Colonic mucosa (tissue), 4 donors: ENCODE measurements at regions of chr17 and their contacts with region 1.

Region 1: DNA sequence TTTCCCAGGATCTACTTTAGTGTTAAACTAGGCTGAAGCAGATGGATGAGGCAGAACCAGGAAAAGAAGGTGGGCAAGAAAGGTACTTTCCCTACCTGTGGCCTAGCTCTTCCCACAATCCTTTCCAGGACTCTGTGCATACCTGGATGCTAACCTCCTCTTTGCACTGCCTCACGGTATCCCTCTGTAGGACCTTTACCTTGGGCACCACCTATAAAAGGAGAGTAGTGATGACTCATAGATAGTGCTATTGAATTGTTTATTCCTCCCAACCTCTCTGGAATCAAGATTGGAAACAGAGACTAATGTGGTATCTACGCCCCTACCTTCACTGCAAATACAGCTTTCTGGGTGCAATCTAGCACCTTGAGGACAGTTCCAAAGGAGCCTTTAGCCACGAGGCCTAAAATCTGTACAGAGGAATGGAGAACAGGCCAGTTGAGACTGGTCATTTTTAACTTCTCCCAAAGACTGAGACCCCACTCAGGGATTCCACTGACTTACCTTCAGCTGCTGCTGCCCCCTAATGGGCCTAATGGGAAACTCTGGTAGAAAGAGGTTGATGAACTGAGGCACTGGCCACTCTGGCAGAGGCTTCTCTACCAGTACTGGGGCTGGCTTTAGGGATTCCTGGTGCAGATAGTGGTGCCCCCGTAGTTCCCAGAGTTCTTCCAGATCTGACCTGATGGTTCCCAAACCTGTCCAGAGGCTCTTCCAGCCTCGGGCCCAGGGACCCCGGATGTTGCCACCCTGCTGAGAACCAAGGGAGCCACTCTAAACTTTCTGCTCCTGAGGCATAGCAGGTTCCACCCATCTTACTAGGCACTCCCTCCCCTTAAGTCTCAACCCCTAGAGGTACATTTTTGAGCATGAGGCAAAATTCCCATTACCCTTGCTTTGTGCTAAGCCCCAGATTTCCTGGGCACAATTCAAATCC is 781 bp downstream of the RSKR start:
- DNase-seq: peak; percentile 29
- H3K4me3 ChIP-seq: no peak overlapping the region
- H3K27ac ChIP-seq: no peak overlapping the region
- H3K4me1 ChIP-seq: no peaks in the 10 kb centered on the region
- H3K27me3 ChIP-seq: no peaks in the 10 kb centered on the region
- CTCF ChIP-seq: peak; percentile 64

Region 2: GRCh38 chr17:27915709-27916108 is 697.5 kb before region 1 on chr17:
- intact Hi-C with region 1: no loop called
- DNase-seq: no peak
- H3K4me3 ChIP-seq: no peak overlapping the region
- H3K27ac ChIP-seq: no peak overlapping the region
- H3K4me1 ChIP-seq: no peaks in the 10 kb centered on the region
- H3K27me3 ChIP-seq: no peaks in the 10 kb centered on the region
- CTCF ChIP-seq: no peak

Region 3: GRCh38 chr17:28494445-28495188 is 118.6 kb before region 1 on chr17:
- intact Hi-C with region 1: loop called (anchors 5 kb)
- DNase-seq: peak; percentile 84
- H3K4me3 ChIP-seq: no peak overlapping the region
- H3K27ac ChIP-seq: no peak overlapping the region
- H3K4me1 ChIP-seq: no peaks in the 10 kb centered on the region
- H3K27me3 ChIP-seq: no peaks in the 10 kb centered on the region
- CTCF ChIP-seq: peak; percentile 89

Region 4: GRCh38 chr17:28547623-28548416 is 65.4 kb before region 1 on chr17:
- intact Hi-C with region 1: loop called (anchors 2 kb)
- DNase-seq: peak; percentile 91
- H3K4me3 ChIP-seq: no peak overlapping the region
- H3K27ac ChIP-seq: peak overlapping the region; percentile 44
- H3K4me1 ChIP-seq: no peaks in the 10 kb centered on the region
- H3K27me3 ChIP-seq: no peaks in the 10 kb centered on the region
- CTCF ChIP-seq: peak; percentile 97

Region 5: DNA sequence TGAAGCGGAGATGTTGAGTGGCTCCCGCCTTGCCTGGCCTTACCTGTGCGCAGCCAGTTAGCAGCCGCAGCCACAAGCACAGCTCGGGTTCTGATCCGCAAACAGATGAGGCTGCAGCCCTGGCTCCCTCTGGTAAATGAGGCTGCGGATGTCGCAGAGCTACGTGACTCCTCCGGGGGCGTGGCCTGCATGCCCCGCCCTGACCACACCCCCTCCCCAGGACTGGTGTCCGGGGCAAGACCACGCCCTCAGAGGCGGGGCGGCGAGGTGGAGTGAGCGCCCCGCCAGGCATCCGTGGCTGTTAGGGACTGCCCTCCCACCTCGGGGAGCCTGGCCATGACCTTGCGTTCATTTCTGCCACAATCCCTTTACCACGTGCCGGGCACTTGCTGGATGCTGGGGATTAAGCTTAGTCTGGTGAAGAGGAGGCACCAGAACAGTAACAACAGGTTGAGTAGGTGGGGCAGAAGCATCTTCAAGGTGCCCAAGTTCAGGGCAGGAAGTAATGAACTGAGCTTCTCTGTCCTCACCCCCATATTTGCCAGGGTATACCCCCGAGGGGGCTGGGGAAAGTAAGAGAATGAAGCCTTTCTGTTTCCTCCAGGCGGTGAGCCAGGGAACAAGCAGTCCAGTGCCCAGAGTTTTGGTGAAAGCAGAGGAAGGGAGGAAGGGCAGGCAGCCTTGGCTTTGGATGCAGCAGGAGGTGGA is 36.3 kb before region 1 on chr17 and contains the start of gene ALDOC:
- intact Hi-C with region 1: no loop called
- DNase-seq: peak; percentile 99
- H3K4me3 ChIP-seq: peak within 1 kb of the TSS; percentile 28
- H3K27ac ChIP-seq: peak within 1 kb of the TSS; percentile 10
- H3K4me1 ChIP-seq: no peaks in the 10 kb centered on the region
- H3K27me3 ChIP-seq: no peaks in the 10 kb centered on the region
- CTCF ChIP-seq: no peak
- total RNA-seq, gene ALDOC: 14.4 to 111 TPM